ENCODE measurements at regions of chr21 and their contacts with region 1.

Region 1: GRCh38 chr21:43938751-43939442 is 73.2 kb upstream of the TRAPPC10 start:
- DNase-seq: peak; percentile 94
- CTCF ChIP-seq: peak; percentile 99

Region 2: GRCh38 chr21:43810505-43811261 is 128.2 kb before region 1 on chr21:
- CTCF ChIA-PET with region 1: interaction called, 18 read pairs
- POLR2A ChIA-PET with region 1: no interaction called
- DNase-seq: peak; percentile 95
- CTCF ChIP-seq: peak; percentile 98

Region 3: GRCh38 chr21:43866260-43866629 is 72.7 kb before region 1 on chr21:
- CTCF ChIA-PET with region 1: interaction called, 7 read pairs
- POLR2A ChIA-PET with region 1: interaction called, 10 read pairs
- DNase-seq: peak; percentile 75
- CTCF ChIP-seq: no peak

Region 4: GRCh38 chr21:43921979-43922945 is 16.6 kb before region 1 on chr21:
- CTCF ChIA-PET with region 1: interaction called, 49 read pairs
- POLR2A ChIA-PET with region 1: interaction called, 7 read pairs
- DNase-seq: peak; percentile 78
- CTCF ChIP-seq: no peak

Region 5: GRCh38 chr21:43956670-43957035 is 17.8 kb after region 1 on chr21:
- CTCF ChIA-PET with region 1: interaction called, 30 read pairs
- POLR2A ChIA-PET with region 1: interaction called, 3 read pairs
- DNase-seq: no peak
- CTCF ChIP-seq: no peak

Measured in GM10248 (cell line).